CD4-positive, alpha-beta memory T cell (primary cell): ENCODE measurements at regions of chr17 and their contacts with region 1.

Region 1: DNA sequence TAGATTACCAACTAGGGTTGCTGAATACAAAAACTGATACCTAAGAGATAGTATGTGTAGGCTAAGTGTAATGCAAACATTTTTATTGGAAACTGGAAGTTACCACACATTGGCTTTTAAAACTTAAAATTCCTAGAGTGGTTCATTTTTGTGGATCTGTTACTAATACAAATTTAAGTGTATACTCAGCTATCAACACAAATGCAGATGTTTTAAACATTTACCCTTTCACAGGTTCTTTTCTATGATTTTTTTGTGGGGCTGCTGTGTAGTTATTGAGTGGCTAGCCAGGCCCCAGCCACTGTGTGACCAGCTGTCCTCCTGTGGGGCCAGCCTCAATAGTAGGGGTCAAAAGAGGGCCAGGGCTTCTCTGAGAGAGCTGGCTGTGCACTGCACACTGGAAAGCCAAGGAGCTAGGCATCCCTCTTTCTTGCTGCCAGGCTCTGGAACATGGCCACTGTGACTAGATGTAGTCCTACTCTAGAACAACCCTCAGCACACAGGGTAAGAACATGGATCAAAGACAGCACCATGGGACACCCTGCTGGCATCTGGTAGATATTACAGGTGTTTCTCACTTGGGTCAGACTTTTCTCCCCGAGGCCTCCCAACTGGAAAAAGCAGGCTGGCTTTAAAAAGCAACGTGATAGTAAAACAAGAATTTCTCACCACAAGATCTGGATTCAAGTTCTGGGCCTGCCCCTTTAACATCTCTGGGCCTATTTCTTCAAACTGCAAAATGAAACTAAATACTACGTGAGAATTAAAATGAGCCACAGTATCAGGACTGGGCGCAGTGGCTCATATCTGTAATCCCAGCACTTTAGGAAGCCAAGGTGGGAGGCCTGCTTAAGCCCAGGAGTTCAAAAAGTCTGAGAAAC is 7.3 kb upstream of the VEZF1 start:
- DNase-seq: peak; percentile 56 to 65 (median 59)
- H3K4me3 ChIP-seq: no peak overlapping the region
- H3K4me3 Mint-ChIP-seq: peak overlapping the region in 4 of 8 donors; percentile 2 to 74 (median 33)
- H3K27ac ChIP-seq: peak overlapping the region; percentile 29
- H3K27ac Mint-ChIP-seq: peak overlapping the region; percentile 59 to 88 (median 76)
- H3K4me1 ChIP-seq: peaks cover 28% of the 10 kb centered on the region
- H3K4me1 Mint-ChIP-seq: peaks cover 22 to 47% (median 36%) of the 10 kb centered on the region in 4 donors
- H3K27me3 ChIP-seq: no peaks in the 10 kb centered on the region
- H3K27me3 Mint-ChIP-seq: no peaks in the 10 kb centered on the region

Region 2: GRCh38 chr17:57552114-57552624 is 443.1 kb before region 1 on chr17:
- CTCF ChIA-PET with region 1: no interaction called
- POLR2A ChIA-PET with region 1: no interaction called
- intact Hi-C with region 1: no loop called
- DNase-seq: no peak
- H3K4me3 ChIP-seq: no peak overlapping the region
- H3K4me3 Mint-ChIP-seq: peak overlapping the region in 1 of 8 donors; percentile 11
- H3K27ac ChIP-seq: no peak overlapping the region
- H3K27ac Mint-ChIP-seq: peak overlapping the region in 3 of 7 donors; percentile 17 to 64 (median 48)
- H3K4me1 ChIP-seq: no peaks in the 10 kb centered on the region
- H3K4me1 Mint-ChIP-seq: peaks cover 12 to 40% (median 15%) of the 10 kb centered on the region in 4 donors
- H3K27me3 ChIP-seq: no peaks in the 10 kb centered on the region
- H3K27me3 Mint-ChIP-seq: no peaks in the 10 kb centered on the region

Region 3: DNA sequence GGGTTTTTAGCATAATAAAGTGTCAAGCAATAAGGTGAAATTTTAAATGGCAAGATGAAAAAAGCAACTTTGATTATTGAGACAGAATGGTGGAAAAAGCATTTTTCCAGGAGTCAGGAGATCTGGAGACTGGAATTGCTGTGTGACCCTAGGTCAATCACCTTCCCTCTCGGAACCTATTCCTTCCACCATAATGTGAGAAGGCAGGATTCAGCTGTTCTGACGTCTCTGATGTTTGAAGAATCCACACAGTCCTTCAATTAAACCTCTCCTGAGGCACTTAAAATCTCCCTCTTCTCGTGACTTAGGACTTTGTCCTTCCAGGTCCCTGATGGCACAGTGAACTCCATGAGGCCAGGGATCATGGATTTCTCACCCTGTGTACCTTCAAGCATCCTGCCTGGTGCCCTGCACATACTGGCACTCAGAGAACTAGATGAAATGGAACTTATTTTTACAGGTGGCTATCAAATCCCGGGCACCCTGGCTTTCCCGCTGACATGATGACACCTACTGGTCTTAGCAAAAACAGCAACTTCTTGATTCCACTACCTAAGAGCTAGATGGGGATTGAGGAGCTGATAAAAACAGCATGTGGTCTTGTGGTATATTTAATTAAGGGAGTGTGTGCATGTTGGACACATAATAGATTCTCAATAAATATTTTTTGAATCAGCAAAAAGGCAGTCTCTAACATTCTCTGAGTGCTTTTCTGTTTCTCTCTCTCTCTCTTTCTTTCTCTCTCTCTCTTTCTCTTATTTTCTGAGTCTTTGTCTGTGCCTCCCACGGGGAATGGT is 247.9 kb before region 1 on chr17:
- CTCF ChIA-PET with region 1: no interaction called
- POLR2A ChIA-PET with region 1: no interaction called
- intact Hi-C with region 1: loop called (anchors 5 kb)
- DNase-seq: peak; percentile 45 to 57 (median 49)
- H3K4me3 ChIP-seq: no peak overlapping the region
- H3K4me3 Mint-ChIP-seq: no peak overlapping the region
- H3K27ac ChIP-seq: no peak overlapping the region
- H3K27ac Mint-ChIP-seq: peak overlapping the region in 1 of 7 donors; percentile 37
- H3K4me1 ChIP-seq: no peaks in the 10 kb centered on the region
- H3K4me1 Mint-ChIP-seq: peaks cover 0 to 1% (median 0%) of the 10 kb centered on the region in 4 donors
- H3K27me3 ChIP-seq: no peaks in the 10 kb centered on the region
- H3K27me3 Mint-ChIP-seq: peaks cover 3 to 9% of the 10 kb centered on the region in 2 donors

Region 4: DNA sequence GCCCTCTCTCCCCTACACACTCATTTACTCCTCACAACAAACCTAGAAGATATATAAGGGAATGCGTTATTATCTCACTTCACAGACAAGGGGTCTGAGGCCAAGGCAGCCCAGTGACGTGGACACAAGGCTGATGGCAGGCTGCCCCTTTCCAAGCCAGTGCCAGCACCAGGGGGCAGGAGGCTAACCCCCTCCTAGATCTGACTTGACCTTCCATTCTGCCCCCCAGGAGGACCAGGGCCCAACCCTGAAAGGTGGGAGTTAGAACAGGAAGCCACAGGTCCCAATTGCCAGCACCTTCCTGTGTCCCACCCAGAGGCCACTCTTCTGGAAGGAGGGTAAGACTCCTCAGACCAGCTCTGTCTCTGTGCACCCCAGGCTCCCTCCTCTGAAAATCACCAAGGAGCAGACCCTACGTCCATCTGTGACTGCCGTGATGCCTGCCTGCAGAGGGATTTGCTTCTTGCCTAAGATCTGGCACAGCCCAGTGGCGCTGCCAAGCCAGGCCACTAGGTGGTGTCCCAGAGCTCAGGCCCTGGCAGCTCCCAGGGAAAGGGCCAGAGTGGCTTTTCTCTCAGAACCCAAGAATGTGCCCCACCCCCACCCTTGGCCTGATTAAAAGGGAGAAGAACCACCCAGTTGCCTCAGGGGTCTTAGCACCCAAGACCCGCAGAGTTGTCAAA is 103.0 kb before region 1 on chr17:
- CTCF ChIA-PET with region 1: interaction called, 150 read pairs
- POLR2A ChIA-PET with region 1: interaction called, 4 read pairs
- intact Hi-C with region 1: loop called (anchors 1 kb)
- DNase-seq: peak; percentile 62 to 72 (median 66)
- H3K4me3 ChIP-seq: no peak overlapping the region
- H3K4me3 Mint-ChIP-seq: no peak overlapping the region
- H3K27ac ChIP-seq: no peak overlapping the region
- H3K27ac Mint-ChIP-seq: no peak overlapping the region
- H3K4me1 ChIP-seq: no peaks in the 10 kb centered on the region
- H3K4me1 Mint-ChIP-seq: peaks cover 2 to 7% (median 5%) of the 10 kb centered on the region in 4 donors
- H3K27me3 ChIP-seq: no peaks in the 10 kb centered on the region
- H3K27me3 Mint-ChIP-seq: peaks cover 0 to 6% of the 10 kb centered on the region in 2 donors

Region 5: DNA sequence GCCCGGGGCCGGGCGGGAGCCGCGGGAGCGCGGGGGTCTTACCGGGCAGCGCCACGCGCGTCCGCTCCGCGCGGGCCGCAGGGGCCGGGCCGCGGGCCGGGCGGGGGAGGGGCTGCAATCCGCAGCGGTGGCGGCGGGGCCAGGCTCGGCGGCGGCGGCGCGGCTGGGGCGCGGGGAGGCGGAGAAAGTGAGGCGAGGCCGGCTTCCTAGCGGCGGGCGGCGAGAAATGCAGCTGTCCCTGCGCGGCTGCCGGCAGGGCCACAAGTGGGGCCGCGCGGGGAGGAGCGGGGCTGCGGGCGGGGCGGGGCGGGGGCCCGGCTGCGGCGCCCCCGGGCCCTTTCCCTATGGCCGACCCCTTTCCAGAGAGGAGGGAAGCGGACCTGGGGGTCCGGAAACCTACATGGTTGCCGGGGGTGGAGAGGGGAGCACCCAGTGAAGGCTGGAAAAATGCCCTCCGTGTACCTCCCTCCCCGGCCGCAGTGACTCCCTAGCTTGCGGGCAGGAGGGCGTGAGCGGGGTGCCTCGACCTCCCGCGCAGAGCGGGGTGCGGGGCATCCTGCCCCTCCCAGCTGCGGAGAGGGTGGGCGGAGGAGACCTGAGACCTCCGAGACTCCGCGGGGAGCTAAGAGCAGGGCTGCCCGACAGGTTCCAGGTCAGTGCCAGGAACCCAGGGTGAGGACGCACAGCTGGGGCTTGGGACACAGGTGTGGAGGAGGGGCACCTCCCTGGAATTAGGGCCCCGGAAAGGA is 40.0 kb before region 1 on chr17 and contains the start of gene CUEDC1:
- CTCF ChIA-PET with region 1: interaction called, 5 read pairs
- POLR2A ChIA-PET with region 1: interaction called, 9 read pairs
- intact Hi-C with region 1: loop called (anchors 5 kb)
- DNase-seq: peak; percentile 45 to 56 (median 54)
- H3K4me3 ChIP-seq: peak within 1 kb of the TSS; percentile 42 to 63
- H3K4me3 Mint-ChIP-seq: peak within 1 kb of the TSS; percentile 78 to 86 (median 82)
- H3K27ac ChIP-seq: no peak within 1 kb of the TSS
- H3K27ac Mint-ChIP-seq: peak within 1 kb of the TSS in 3 of 7 donors; percentile 8 to 79 (median 74)
- H3K4me1 ChIP-seq: peaks cover 15% of the 10 kb centered on the region
- H3K4me1 Mint-ChIP-seq: peaks cover 18 to 30% (median 22%) of the 10 kb centered on the region in 4 donors
- H3K27me3 ChIP-seq: peaks cover 4% of the 10 kb centered on the region
- H3K27me3 Mint-ChIP-seq: peaks cover 2 to 6% of the 10 kb centered on the region in 2 donors
- total RNA-seq, gene CUEDC1: 0.61 to 0.90 TPM

Region 6: GRCh38 chr17:57982452-57983170 is 12.7 kb before region 1 on chr17:
- CTCF ChIA-PET with region 1: interaction called, 70 read pairs
- POLR2A ChIA-PET with region 1: interaction called, 13 read pairs
- intact Hi-C with region 1: loop called (anchors 1 kb)
- DNase-seq: no peak
- H3K4me3 ChIP-seq: no peak overlapping the region
- H3K4me3 Mint-ChIP-seq: peak overlapping the region in 6 of 8 donors; percentile 36 to 73 (median 46)
- H3K27ac ChIP-seq: no peak overlapping the region
- H3K27ac Mint-ChIP-seq: peak overlapping the region in 6 of 7 donors; percentile 1 to 82 (median 40)
- H3K4me1 ChIP-seq: peaks cover 56% of the 10 kb centered on the region
- H3K4me1 Mint-ChIP-seq: peaks cover 51 to 80% (median 67%) of the 10 kb centered on the region in 4 donors
- H3K27me3 ChIP-seq: no peaks in the 10 kb centered on the region
- H3K27me3 Mint-ChIP-seq: no peaks in the 10 kb centered on the region

Region 7: DNA sequence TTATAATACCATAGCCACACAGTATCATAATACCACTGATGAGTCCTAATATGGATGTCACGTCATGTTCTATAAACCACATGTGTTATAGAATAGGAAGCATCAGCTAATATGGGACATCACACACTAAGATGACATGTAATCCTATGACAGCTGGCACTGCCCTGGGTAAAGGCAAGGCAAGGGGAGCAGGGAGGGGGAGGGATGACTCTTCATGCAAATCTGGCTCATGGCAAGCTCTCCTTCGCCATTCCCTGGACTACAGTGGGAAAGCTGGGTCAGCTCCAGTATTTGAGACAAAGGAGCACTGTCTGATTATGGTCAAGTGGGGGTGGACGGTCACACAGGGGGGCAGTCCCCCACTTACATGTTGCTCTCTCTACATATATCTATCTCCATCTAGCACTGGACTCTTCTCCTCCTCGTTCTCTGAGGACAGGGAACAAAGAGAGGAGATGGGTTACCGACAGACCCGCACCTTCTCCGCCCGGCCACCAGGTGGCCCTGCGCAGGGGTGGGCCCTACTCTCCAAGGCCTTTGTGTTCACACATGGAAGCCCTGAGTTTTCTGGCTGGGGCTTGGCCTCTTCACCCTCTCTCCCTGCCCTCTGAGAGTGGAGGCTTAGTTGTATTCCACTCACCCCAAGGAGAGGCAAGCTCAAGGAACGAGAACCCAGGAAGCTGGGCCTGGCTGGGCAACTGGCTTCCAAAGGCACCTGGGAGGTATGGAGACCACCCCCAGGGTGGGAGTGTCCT is 308.8 kb after region 1 on chr17:
- CTCF ChIA-PET with region 1: no interaction called
- POLR2A ChIA-PET with region 1: no interaction called
- intact Hi-C with region 1: no loop called
- DNase-seq: peak in 4 of 5 donors; percentile 59 to 65 (median 62)
- H3K4me3 ChIP-seq: no peak overlapping the region
- H3K4me3 Mint-ChIP-seq: no peak overlapping the region
- H3K27ac ChIP-seq: no peak overlapping the region
- H3K27ac Mint-ChIP-seq: peak overlapping the region in 4 of 7 donors; percentile 0 to 70 (median 44)
- H3K4me1 ChIP-seq: peaks cover 4% of the 10 kb centered on the region
- H3K4me1 Mint-ChIP-seq: peaks cover 4 to 10% (median 5%) of the 10 kb centered on the region in 4 donors
- H3K27me3 ChIP-seq: no peaks in the 10 kb centered on the region
- H3K27me3 Mint-ChIP-seq: no peaks in the 10 kb centered on the region